ENCODE measurements at regions of chr12 and their contacts with region 1.

Region 1: GRCh38 chr12:31477687-31478086 is 113.2 kb downstream of the DENND5B start:
- DNase-seq: no peak
- ATAC-seq: no peak
- H3K4me3 ChIP-seq: no peak overlapping the region
- H3K27ac ChIP-seq: no peak overlapping the region
- H3K4me1 ChIP-seq: peaks cover 11% of the 10 kb centered on the region
- H3K27me3 ChIP-seq: no peaks in the 10 kb centered on the region
- CTCF ChIP-seq: no peak

Region 2: GRCh38 chr12:31629756-31630732 is 152.4 kb after region 1 on chr12:
- CTCF ChIA-PET with region 1: no interaction called
- POLR2A ChIA-PET with region 1: no interaction called
- intact Hi-C with region 1: loop called (anchors 10 kb)
- DNase-seq: no peak
- ATAC-seq: no peak
- H3K4me3 ChIP-seq: no peak overlapping the region
- H3K27ac ChIP-seq: no peak overlapping the region
- H3K4me1 ChIP-seq: no peaks in the 10 kb centered on the region
- H3K27me3 ChIP-seq: no peaks in the 10 kb centered on the region
- CTCF ChIP-seq: no peak

Region 3: DNA sequence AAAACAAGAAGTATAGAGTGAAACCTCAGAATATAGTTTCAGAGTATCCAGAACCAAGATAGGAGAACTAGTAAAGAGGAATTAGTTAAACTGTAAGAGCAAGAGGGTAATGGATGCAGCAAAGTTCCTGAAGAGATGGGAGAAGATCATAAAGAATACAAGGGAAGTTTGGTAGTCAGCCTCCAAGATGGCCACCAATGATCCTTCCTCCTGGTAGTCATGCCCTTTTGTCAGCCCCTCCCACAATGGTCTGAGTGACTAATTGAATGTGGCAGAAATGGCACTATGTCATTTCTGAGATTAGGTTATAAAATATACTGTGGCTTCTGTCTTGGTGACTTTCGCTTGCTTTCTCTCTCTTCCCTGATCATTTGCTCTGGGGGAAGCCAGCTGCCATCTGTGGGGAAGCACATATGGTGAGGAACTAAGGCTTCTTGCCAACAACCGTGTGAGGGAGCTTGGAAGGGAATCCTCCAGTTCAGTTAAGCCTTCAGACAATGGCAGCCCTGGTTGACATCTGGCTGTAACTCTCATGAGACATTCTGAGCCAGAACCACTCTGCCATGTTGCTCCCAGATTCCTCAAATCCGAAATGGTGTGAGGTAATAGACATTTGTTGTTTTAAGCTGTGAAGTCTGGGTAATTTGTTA is 306.4 kb after region 1 on chr12:
- CTCF ChIA-PET with region 1: no interaction called
- POLR2A ChIA-PET with region 1: no interaction called
- intact Hi-C with region 1: no loop called
- DNase-seq: no peak
- ATAC-seq: no peak
- H3K4me3 ChIP-seq: no peak overlapping the region
- H3K27ac ChIP-seq: no peak overlapping the region
- H3K4me1 ChIP-seq: no peaks in the 10 kb centered on the region
- H3K27me3 ChIP-seq: no peaks in the 10 kb centered on the region
- CTCF ChIP-seq: no peak